ENCODE measurements at regions of chr2 and their contacts with region 1.

Region 1: GRCh38 chr2:167212014-167212648 is 323.9 kb downstream of the XIRP2 start:
- DNase-seq: peak; percentile 36
- ATAC-seq: no peak
- H3K4me3 ChIP-seq: no peak overlapping the region
- H3K27ac ChIP-seq: no peak overlapping the region
- H3K4me1 ChIP-seq: no peaks in the 10 kb centered on the region
- H3K27me3 ChIP-seq: no peaks in the 10 kb centered on the region
- CTCF ChIP-seq: peak; percentile 68; the same call in 1 of the 2 replicates

Region 2: GRCh38 chr2:166436189-166436588 is 775.9 kb before region 1 on chr2:
- CTCF ChIA-PET with region 1: no interaction called
- POLR2A ChIA-PET with region 1: no interaction called
- in situ Hi-C with region 1: no loop called
- intact Hi-C with region 1: no loop called
- DNase-seq: no peak
- ATAC-seq: no peak
- H3K4me3 ChIP-seq: no peak overlapping the region
- H3K27ac ChIP-seq: no peak overlapping the region
- H3K4me1 ChIP-seq: no peaks in the 10 kb centered on the region
- H3K27me3 ChIP-seq: no peaks in the 10 kb centered on the region
- CTCF ChIP-seq: no peak

Region 3: DNA sequence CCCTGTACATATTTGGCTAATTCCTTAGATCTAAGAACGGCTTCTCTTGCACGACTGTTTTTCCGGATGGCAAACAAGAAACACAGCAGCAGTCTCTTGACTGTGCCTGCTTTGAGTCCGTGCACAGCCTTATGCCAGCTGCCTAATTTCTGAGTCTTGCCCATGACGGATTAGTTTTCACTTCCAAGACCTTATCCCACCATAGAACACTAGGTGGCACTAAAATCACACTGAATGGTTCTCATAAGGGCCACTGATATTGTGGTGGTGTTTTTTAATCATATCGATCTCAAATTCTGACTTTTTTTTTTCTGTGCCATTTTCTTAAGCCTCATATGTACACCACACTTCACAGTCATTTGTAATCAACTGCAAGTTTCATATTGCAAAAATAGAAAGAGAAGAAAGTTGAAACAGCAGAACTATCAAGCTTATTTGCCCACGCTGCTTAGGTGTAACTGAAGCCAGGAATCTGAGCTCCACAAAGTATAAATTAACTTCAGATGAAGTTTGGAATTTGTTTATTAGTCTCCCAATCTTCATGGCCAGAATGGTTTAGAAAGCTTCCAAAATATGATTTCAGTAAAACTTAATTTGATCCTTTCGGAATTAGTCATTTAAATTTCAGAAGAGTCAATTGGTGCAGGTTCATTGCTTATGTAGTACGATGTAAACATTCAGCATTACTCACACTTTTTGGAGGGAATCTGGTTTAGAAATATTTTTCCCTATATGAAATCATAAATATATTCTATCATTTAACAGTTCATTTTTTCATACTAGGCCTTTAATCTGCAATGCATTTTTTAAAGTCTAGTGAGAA is 672.6 kb before region 1 on chr2:
- CTCF ChIA-PET with region 1: no interaction called
- POLR2A ChIA-PET with region 1: no interaction called
- in situ Hi-C with region 1: no loop called
- intact Hi-C with region 1: loop called (anchors 1 kb)
- DNase-seq: peak; percentile 35
- ATAC-seq: peak; percentile 87
- H3K4me3 ChIP-seq: no peak overlapping the region
- H3K27ac ChIP-seq: no peak overlapping the region
- H3K4me1 ChIP-seq: no peaks in the 10 kb centered on the region
- H3K27me3 ChIP-seq: no peaks in the 10 kb centered on the region
- CTCF ChIP-seq: peak; percentile 83

Region 4: GRCh38 chr2:167368371-167368770 is 156.2 kb after region 1 on chr2:
- CTCF ChIA-PET with region 1: no interaction called
- POLR2A ChIA-PET with region 1: no interaction called
- in situ Hi-C with region 1: no loop called
- intact Hi-C with region 1: no loop called
- DNase-seq: no peak
- ATAC-seq: no peak
- H3K4me3 ChIP-seq: no peak overlapping the region
- H3K27ac ChIP-seq: no peak overlapping the region
- H3K4me1 ChIP-seq: no peaks in the 10 kb centered on the region
- H3K27me3 ChIP-seq: no peaks in the 10 kb centered on the region
- CTCF ChIP-seq: no peak

Region 5: GRCh38 chr2:167980439-167980838 is 768.3 kb after region 1 on chr2:
- CTCF ChIA-PET with region 1: interaction called, 10 read pairs
- POLR2A ChIA-PET with region 1: no interaction called
- in situ Hi-C with region 1: no loop called
- intact Hi-C with region 1: no loop called
- DNase-seq: no peak
- ATAC-seq: no peak
- H3K4me3 ChIP-seq: no peak overlapping the region
- H3K27ac ChIP-seq: no peak overlapping the region
- H3K4me1 ChIP-seq: no peaks in the 10 kb centered on the region
- H3K27me3 ChIP-seq: no peaks in the 10 kb centered on the region
- CTCF ChIP-seq: no peak